ENCODE measurements at regions of chr6 and their contacts with region 1.

Region 1: GRCh38 chr6:38020593-38020992 is 201.1 kb downstream of the ZFAND3 start:
- DNase-seq: no peak
- H3K4me3 ChIP-seq: no peak overlapping the region
- H3K27me3 ChIP-seq: no peaks in the 10 kb centered on the region
- CTCF ChIP-seq: no peak

Region 2: GRCh38 chr6:38034274-38034914 is 13.8 kb after region 1 on chr6:
- CTCF ChIA-PET with region 1: interaction called, 16 read pairs
- POLR2A ChIA-PET with region 1: no interaction called
- DNase-seq: no peak
- H3K4me3 ChIP-seq: no peak overlapping the region
- H3K27me3 ChIP-seq: no peaks in the 10 kb centered on the region
- CTCF ChIP-seq: peak; percentile 75

Measured in BJ (cell line).